HCT116 (cell line): ENCODE measurements at regions of chr17 and their contacts with region 1.

Region 1: DNA sequence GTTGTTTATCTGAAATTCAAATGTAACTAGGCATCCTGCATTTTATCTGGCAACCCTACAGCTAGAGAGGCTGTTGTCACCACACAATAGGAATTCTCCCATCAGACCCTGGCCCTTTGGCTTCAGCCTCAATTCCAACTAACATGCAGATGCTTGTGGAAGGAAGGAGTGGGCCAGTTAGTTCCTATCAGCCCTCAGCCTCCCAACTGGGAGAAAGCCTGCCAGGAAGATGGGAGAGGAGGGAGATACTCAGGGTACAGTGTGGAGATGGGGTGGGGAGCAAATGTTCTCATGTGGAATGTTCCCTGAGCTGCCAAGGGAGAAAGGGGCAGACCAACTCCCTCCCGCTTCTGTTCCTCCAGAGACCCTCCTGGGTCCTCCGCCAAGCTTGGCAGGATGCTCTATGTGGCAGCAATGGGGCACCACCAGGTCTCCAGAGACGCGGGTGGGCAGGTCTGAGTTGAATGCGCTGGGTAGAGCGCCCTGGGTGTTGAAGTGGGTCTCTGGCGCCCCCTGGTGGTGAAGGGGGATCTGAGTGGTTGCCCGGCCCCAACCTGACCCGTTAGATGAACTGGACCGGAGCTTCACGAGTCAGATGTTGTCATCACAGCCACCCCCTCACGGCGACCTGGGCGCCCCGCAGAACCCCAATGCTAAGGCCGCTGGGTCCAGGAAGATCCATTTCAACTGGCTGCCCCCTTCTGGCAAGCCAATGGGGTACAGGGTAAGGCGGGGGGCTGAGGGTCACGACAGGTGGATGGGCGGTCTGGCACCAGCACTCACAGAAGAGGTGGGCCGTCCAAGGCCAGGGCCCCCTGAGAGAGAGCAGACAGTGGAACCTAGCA is 15.2 kb downstream of the GALK1 start:
- DNase-seq: no peak
- ATAC-seq: peak; percentile 81
- H3K4me3 ChIP-seq: no peak overlapping the region
- H3K27ac ChIP-seq: peak overlapping the region; percentile 41; the same call in 1 of the 2 replicates
- H3K4me1 ChIP-seq: peaks cover 0 to 3% of the 10 kb centered on the region in 2 experiments; a peak in 1 of 4 replicates
- H3K27me3 ChIP-seq: no peaks in the 10 kb centered on the region
- CTCF ChIP-seq: peak; percentile 85 to 98 (median 95)
- POLR2A ChIP-seq: no peak
- RAD21 ChIP-seq: peak; percentile 83

Region 2: DNA sequence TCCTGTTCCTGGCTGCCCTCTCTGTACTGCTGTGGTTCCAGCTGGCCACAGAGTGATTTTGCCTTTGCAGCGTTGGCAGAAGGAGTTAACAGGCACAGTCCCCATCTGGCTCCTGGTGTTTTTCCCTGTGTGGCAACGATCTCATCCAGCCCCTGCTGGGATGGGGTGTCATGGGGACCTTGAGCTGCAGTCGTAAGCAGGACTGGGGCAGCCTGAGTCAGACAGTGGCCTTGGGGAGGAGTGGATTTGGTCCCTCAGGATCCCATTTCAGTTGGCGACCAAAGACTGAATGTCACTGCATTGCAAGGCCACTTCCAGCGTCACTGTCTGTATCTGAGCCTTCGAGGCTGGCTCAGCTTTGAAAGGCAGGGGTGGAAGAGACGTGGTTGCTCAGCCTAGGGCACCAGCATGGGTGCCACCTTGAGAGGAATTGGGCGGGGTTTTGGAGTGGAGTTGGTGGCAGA is 281.4 kb before region 1 on chr17:
- CTCF ChIA-PET with region 1: no interaction called
- POLR2A ChIA-PET with region 1: no interaction called
- RAD21 ChIA-PET with region 1: no interaction called
- intact Hi-C with region 1: no loop called
- DNase-seq: no peak
- ATAC-seq: no peak
- H3K4me3 ChIP-seq: no peak overlapping the region
- H3K27ac ChIP-seq: no peak overlapping the region
- H3K4me1 ChIP-seq: no peaks in the 10 kb centered on the region
- H3K27me3 ChIP-seq: no peaks in the 10 kb centered on the region
- CTCF ChIP-seq: no peak
- POLR2A ChIP-seq: no peak
- RAD21 ChIP-seq: no peak

Region 3: DNA sequence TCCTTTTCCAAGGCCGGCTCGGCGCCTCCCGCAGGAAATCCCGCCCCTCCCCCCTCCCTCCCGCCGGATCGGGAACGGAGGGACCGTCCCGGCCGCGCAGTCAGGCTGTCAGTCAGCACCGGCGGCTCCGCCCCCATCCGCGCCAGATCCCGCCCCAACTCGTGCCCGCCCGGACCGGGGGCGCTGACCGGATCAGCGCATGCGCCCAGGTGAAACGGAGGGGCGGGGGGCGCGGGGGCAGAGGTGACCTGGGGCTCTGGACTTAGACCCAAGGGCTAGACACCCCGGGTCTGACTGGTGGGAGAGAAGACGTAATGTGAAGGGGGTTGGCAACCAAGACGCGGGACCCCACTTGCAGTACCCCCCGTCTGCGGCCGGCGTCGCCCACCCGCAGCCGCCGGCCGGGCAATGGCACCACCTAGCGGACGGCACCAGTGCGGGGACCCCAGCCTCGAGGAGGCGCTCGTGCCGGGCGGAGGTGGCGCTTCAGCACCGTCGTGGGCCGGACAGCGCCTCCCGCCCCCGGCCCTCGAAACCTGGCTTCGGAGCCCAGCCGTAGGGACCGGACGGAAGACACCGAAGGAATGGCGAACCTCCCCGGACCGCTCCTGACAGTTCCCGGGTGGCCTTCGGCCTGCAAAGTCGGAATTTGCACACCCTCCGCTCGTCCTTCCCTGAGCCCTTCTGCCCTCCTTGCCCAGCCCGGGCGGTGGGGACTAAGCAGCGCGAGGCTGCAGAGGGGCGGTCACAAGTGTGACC is 234.1 kb before region 1 on chr17 and contains the start of gene CASKIN2:
- CTCF ChIA-PET with region 1: interaction called, 5 read pairs
- POLR2A ChIA-PET with region 1: no interaction called
- RAD21 ChIA-PET with region 1: interaction called in 1 of 2 experiments, 3 read pairs
- intact Hi-C with region 1: loop called (anchors 10 kb)
- DNase-seq: peak; percentile 88
- ATAC-seq: peak; percentile 77
- H3K4me3 ChIP-seq: peak within 1 kb of the TSS; percentile 87 to 91
- H3K27ac ChIP-seq: peak within 1 kb of the TSS; percentile 86
- H3K4me1 ChIP-seq: peaks cover 28 to 60% of the 10 kb centered on the region in 2 experiments
- H3K27me3 ChIP-seq: no peaks in the 10 kb centered on the region
- CTCF ChIP-seq: peak; percentile 100
- POLR2A ChIP-seq: no peak
- RAD21 ChIP-seq: peak; percentile 94
- total RNA-seq, gene CASKIN2: 38.4 TPM

Region 4: DNA sequence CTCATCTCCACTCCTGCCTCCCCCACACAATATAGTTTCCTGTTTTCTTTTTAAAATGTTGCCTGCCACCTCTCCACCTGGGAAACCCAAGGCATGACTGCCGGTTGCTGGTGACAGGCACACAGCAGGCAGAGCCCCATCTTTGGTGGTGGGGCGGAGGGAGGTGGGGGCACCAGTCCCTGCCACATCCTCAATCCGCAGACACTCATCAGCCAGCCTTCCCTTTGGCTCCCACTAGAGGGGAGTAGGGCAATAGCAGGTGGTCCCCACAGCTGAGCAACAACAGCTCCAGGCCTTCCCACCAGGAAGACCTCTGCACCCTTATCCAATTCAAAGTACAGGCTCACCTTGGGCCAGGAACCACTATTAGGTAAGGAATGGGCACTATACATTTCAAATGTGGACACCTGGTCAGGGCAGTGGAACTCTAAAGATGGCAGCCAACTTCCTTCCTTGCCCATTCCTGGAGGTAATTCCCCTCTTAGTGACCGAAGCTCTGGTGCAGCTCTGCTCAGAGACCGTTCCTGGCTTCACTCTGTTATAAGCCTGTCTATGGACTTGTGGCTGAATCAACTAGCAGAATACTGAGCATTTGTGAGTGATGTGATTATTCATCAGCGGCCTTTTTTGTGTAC is 96.7 kb before region 1 on chr17:
- CTCF ChIA-PET with region 1: interaction called, 35 read pairs
- POLR2A ChIA-PET with region 1: no interaction called
- RAD21 ChIA-PET with region 1: no interaction called
- intact Hi-C with region 1: no loop called
- DNase-seq: no peak
- ATAC-seq: peak; percentile 95
- H3K4me3 ChIP-seq: no peak overlapping the region
- H3K27ac ChIP-seq: no peak overlapping the region
- H3K4me1 ChIP-seq: no peaks in the 10 kb centered on the region
- H3K27me3 ChIP-seq: no peaks in the 10 kb centered on the region
- CTCF ChIP-seq: peak; percentile 87 to 98 (median 95)
- POLR2A ChIP-seq: no peak
- RAD21 ChIP-seq: peak; percentile 82

Region 5: GRCh38 chr17:75679706-75680442 is 69.9 kb before region 1 on chr17:
- CTCF ChIA-PET with region 1: interaction called, 174 read pairs
- POLR2A ChIA-PET with region 1: interaction called, 8 read pairs
- RAD21 ChIA-PET with region 1: interaction called, 10 to 13 read pairs
- intact Hi-C with region 1: loop called (anchors 1 kb)
- DNase-seq: no peak
- ATAC-seq: peak; percentile 33; the same call in 1 of the 2 replicates
- H3K4me3 ChIP-seq: no peak overlapping the region
- H3K27ac ChIP-seq: peak overlapping the region; percentile 48; the same call in 1 of the 2 replicates
- H3K4me1 ChIP-seq: peaks cover 52 to 74% of the 10 kb centered on the region in 2 experiments
- H3K27me3 ChIP-seq: no peaks in the 10 kb centered on the region
- CTCF ChIP-seq: peak; percentile 38 to 90 (median 51); a peak in 5 of 6 replicates
- POLR2A ChIP-seq: no peak
- RAD21 ChIP-seq: peak; percentile 96

Region 6: DNA sequence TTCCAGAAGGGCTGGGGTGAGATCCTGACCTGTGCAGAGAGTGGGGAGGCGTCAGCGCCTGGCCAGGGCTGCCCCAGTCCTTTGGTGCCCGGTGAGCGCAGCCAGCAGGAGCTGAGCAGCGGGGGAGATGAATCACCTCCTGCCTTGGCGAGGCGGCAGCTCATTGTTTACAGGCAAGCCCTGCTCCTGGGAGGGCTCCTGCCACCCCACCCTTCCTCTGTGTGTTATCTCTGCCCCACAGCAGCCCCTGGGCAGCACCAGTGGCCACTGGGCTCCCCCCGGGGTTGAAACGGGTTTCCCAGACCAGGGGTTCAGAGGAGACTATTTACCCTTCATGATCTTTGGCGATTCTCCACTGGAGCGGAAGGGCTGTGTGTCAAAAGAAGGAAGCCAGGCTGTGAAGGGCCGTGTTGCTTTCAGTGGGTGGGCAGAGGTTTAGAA is 42.6 kb before region 1 on chr17:
- CTCF ChIA-PET with region 1: interaction called, 10 read pairs
- POLR2A ChIA-PET with region 1: no interaction called
- RAD21 ChIA-PET with region 1: no interaction called
- intact Hi-C with region 1: no loop called
- DNase-seq: peak; percentile 94
- ATAC-seq: peak; percentile 95
- H3K4me3 ChIP-seq: peak overlapping the region in 1 of 2 experiments; percentile 43; a peak in 2 of 4 replicates
- H3K27ac ChIP-seq: peak overlapping the region; percentile 85
- H3K4me1 ChIP-seq: peaks cover 55 to 86% of the 10 kb centered on the region in 2 experiments
- H3K27me3 ChIP-seq: no peaks in the 10 kb centered on the region
- CTCF ChIP-seq: no peak
- POLR2A ChIP-seq: no peak
- RAD21 ChIP-seq: no peak

Region 7: GRCh38 chr17:75764711-75765421 is 15.1 kb after region 1 on chr17 and contains the start of gene GALK1:
- CTCF ChIA-PET with region 1: interaction called, 73 read pairs
- POLR2A ChIA-PET with region 1: no interaction called
- RAD21 ChIA-PET with region 1: interaction called in 1 of 2 experiments, 3 read pairs
- intact Hi-C with region 1: no loop called
- DNase-seq: no peak
- ATAC-seq: peak; percentile 85
- H3K4me3 ChIP-seq: peak within 1 kb of the TSS; percentile 84 to 91
- H3K27ac ChIP-seq: peak within 1 kb of the TSS; percentile 78
- H3K4me1 ChIP-seq: peaks cover 13 to 29% of the 10 kb centered on the region in 2 experiments
- H3K27me3 ChIP-seq: no peaks in the 10 kb centered on the region
- CTCF ChIP-seq: peak in 2 of 3 experiments; percentile 65 to 94; a peak in 4 of 6 replicates
- POLR2A ChIP-seq: no peak
- RAD21 ChIP-seq: peak; percentile 86
- total RNA-seq, gene GALK1: 57.8 TPM

Region 8: DNA sequence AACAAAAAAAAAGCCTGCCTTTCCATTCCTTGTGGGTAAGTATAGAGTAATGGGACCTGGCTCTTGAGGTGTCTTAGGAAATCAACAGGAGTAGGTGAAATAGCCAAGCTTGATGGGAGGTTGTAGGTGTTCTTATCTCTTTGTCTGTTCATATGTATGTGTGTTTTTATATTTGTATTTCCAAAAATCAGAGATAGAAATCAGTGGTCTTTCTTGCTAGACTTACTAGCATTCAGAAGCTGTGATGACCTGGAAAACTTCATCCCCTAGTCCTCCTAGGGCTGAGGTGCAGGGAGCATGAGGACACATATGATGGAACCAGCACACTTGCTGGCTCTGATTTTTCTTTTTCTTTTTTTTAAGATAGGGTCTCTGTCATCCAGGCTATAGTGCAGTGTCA is 37.1 kb after region 1 on chr17:
- CTCF ChIA-PET with region 1: no interaction called
- POLR2A ChIA-PET with region 1: no interaction called
- RAD21 ChIA-PET with region 1: no interaction called
- intact Hi-C with region 1: no loop called
- DNase-seq: no peak
- ATAC-seq: no peak
- H3K4me3 ChIP-seq: no peak overlapping the region
- H3K27ac ChIP-seq: no peak overlapping the region
- H3K4me1 ChIP-seq: peaks cover 28 to 46% of the 10 kb centered on the region in 2 experiments
- H3K27me3 ChIP-seq: no peaks in the 10 kb centered on the region
- CTCF ChIP-seq: no peak
- POLR2A ChIP-seq: no peak
- RAD21 ChIP-seq: no peak